Pancreas (tissue), 10 donors: ENCODE measurements at regions of chr11 and their contacts with region 1.

Region 1: DNA sequence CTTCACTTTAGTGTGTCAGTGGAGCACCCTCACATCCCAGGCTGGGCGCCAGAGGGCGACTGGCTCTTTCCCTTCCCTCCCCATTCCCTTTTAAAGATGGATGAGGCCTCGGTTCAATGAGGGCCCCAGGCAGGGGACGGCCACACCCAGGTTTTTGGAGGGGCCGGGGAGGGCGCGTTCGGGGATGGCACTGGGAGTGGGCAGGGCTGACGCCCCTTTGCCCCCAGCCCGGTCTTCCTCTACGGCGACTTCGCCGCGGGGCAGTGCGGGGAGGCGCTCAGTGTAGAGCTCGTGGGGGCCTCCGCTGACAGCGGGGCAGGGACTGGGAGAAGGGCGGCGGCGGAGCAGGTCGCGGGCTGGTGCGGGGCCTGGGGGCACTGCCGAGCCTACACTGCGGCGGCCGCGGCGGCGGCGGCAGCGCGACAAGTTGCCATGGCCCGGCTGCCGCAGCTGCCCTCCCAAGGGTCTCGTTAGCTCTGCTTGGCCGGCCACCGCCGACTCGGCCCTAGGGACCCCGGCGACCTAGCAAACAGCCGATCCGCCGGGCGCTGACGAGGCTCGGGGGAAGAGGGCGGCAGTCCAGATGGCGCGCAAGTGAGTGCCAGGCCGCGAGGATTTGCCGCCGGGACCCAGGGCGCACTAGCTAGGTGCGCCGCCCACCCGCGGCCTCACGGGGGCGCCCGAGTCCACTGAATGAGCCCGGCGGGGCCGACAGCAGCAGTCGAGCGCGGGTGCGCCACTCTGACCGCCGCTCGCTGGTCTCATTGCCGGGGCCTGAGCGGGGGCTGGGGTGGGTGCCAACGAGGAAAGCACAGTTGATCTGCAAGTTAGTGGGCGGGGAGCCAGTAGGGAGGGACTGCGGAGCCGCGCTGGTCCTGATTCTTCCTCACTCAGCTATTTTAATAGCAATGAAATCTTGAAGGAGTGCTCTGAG is 92.7 kb downstream of the RRM1 start:
- DNase-seq: peak; percentile 82 to 99 (median 91)
- ATAC-seq: peak; percentile 97 to 99 (median 98)
- H3K4me3 ChIP-seq: peak overlapping the region; percentile 42 to 69 (median 62)
- H3K27ac ChIP-seq: peak overlapping the region in 3 of 4 donors; percentile 19 to 31 (median 28)
- H3K4me1 ChIP-seq: no peaks in the 10 kb centered on the region
- H3K27me3 ChIP-seq: no peaks in the 10 kb centered on the region
- CTCF ChIP-seq: peak; percentile 93 to 97 (median 96)

Region 2: GRCh38 chr11:4375431-4376140 is 188.3 kb after region 1 on chr11:
- intact Hi-C with region 1: no loop called
- DNase-seq: no peak
- ATAC-seq: no peak
- H3K4me3 ChIP-seq: no peak overlapping the region
- H3K27ac ChIP-seq: no peak overlapping the region
- H3K4me1 ChIP-seq: no peaks in the 10 kb centered on the region
- H3K27me3 ChIP-seq: no peaks in the 10 kb centered on the region
- CTCF ChIP-seq: no peak

Region 3: DNA sequence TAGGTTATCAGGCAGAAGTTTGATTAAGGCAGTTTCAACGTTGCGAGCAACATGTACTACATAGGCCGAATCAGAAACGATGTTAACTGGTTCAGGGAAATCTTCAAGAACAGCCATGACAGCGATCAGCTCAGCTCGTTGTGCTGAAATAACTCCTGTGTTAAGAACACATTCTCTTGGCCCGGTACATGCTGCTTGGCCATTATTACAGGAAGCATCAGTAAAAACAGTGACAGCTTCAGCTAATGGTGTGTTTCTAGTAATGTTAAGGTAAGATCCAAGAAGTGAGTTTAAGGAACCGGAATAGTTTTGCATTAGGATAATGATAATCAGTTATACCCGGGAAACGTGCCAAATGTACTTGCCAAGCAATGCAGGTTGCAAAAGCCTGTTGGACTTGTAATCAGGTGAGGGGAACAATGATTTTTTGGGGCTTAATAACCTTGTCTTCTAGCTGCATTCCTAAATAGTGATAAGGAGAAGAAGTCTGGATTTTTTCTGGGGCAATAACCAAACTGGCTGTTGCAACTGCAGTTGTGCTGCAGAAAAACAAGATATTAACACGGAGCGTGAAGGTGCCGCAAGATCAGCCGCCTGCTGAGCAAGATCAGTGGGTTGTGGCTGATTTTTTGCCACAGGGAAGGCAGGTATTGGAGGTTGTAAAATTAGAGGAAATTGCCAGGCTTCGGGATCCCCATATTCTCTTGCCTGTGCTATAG is 309.4 kb after region 1 on chr11:
- intact Hi-C with region 1: loop called in 2 of 3 experiments (anchors 5 to 10 kb)
- DNase-seq: peak in 1 of 6 donors; percentile 14
- ATAC-seq: peak; percentile 28 to 59 (median 41)
- H3K4me3 ChIP-seq: no peak overlapping the region
- H3K27ac ChIP-seq: no peak overlapping the region
- H3K4me1 ChIP-seq: no peaks in the 10 kb centered on the region
- H3K27me3 ChIP-seq: peaks cover 0 to 6% (median 0%) of the 10 kb centered on the region in 4 donors
- CTCF ChIP-seq: no peak

Region 4: DNA sequence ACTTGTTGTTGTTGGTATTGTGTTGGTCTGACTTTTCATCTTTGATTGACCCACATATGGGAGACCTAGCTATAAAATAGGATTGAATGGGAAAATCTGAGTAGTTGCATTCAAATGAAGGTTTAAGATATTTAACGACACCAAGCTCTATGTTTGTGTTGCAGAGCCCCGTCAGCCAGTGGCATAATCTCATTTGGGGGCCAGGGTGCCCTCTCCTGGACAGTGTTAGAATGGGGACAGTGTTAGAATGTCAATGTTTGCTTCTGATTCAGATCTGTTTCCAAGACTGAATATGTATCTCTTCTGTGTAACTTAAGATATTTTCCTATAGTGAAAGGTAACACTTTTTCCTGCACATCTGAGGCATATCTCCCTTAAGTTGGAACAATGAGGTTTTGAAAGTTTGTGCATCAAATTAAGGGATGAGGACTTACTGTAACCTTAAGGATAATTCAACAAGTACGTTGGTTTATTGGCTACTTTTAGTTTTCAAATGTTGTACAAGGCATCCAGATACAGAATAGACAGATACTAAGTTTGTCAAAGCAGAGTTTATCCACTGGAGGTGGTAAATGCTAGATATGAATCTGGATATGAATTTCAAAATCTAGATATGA is 352.4 kb after region 1 on chr11:
- intact Hi-C with region 1: loop called in 1 of 3 experiments (anchors 10 kb)
- DNase-seq: peak in 4 of 6 donors; percentile 8 to 86 (median 44)
- ATAC-seq: peak; percentile 68 to 96 (median 88)
- H3K4me3 ChIP-seq: no peak overlapping the region
- H3K27ac ChIP-seq: no peak overlapping the region
- H3K4me1 ChIP-seq: no peaks in the 10 kb centered on the region
- H3K27me3 ChIP-seq: no peaks in the 10 kb centered on the region
- CTCF ChIP-seq: peak; percentile 38 to 72 (median 44)

Region 5: GRCh38 chr11:5004424-5005274 is 817.3 kb after region 1 on chr11:
- intact Hi-C with region 1: loop called in 1 of 3 experiments (anchors 5 kb)
- DNase-seq: peak; percentile 16 to 72 (median 38)
- ATAC-seq: peak; percentile 55 to 87 (median 80)
- H3K4me3 ChIP-seq: no peak overlapping the region
- H3K27ac ChIP-seq: no peak overlapping the region
- H3K4me1 ChIP-seq: no peaks in the 10 kb centered on the region
- H3K27me3 ChIP-seq: no peaks in the 10 kb centered on the region
- CTCF ChIP-seq: peak; percentile 11 to 52 (median 46)